SK-N-SH (cell line): ENCODE measurements at regions of chr4 and their contacts with region 1.

Region 1: GRCh38 chr4:3346146-3346545 is 53.3 kb downstream of the RGS12 start:
- DNase-seq: peak; percentile 81
- H3K4me3 ChIP-seq: no peak overlapping the region; a peak in 1 of 4 replicates
- H3K27ac ChIP-seq: no peak overlapping the region
- H3K4me1 ChIP-seq: peaks cover 0 to 4% of the 10 kb centered on the region in 2 experiments; a peak in 3 of 4 replicates
- H3K27me3 ChIP-seq: no peaks in the 10 kb centered on the region
- CTCF ChIP-seq: peak; percentile 93
- EP300 ChIP-seq: no peak
- RAD21 ChIP-seq: peak; percentile 87

Region 2: GRCh38 chr4:3324093-3324815 is 21.9 kb before region 1 on chr4:
- CTCF ChIA-PET with region 1: interaction called, 13 read pairs
- POLR2A ChIA-PET with region 1: no interaction called
- DNase-seq: no peak
- H3K4me3 ChIP-seq: no peak overlapping the region
- H3K27ac ChIP-seq: no peak overlapping the region
- H3K4me1 ChIP-seq: peaks cover 4 to 14% of the 10 kb centered on the region in 2 experiments; a peak in 2 of 4 replicates
- H3K27me3 ChIP-seq: no peaks in the 10 kb centered on the region
- CTCF ChIP-seq: no peak
- EP300 ChIP-seq: no peak
- RAD21 ChIP-seq: no peak

Region 3: DNA sequence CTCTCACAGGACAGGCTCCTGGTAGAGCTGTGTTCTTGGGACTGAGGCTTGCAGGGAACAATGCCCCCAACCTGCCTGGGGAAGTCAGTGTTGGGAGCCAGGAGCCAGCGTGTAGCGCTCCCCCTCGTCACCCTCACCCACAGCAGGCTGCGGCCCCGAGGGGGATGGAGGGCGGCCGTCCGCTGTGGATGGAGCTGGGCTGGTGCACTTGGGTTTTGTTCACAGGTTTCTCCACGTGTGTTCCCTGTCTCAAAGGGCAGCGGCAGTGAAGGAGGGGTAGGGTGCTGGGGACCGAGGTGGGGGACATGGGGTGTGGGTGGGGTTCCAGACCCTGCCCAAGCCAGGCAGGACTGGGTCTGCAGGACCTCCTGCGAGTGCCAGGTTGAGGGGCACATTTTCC is 15.8 kb after region 1 on chr4:
- CTCF ChIA-PET with region 1: interaction called, 31 read pairs
- POLR2A ChIA-PET with region 1: no interaction called
- DNase-seq: no peak
- H3K4me3 ChIP-seq: no peak overlapping the region
- H3K27ac ChIP-seq: no peak overlapping the region
- H3K4me1 ChIP-seq: no peaks in the 10 kb centered on the region; a peak in 1 of 4 replicates
- H3K27me3 ChIP-seq: no peaks in the 10 kb centered on the region
- CTCF ChIP-seq: no peak
- EP300 ChIP-seq: no peak
- RAD21 ChIP-seq: no peak

Region 4: DNA sequence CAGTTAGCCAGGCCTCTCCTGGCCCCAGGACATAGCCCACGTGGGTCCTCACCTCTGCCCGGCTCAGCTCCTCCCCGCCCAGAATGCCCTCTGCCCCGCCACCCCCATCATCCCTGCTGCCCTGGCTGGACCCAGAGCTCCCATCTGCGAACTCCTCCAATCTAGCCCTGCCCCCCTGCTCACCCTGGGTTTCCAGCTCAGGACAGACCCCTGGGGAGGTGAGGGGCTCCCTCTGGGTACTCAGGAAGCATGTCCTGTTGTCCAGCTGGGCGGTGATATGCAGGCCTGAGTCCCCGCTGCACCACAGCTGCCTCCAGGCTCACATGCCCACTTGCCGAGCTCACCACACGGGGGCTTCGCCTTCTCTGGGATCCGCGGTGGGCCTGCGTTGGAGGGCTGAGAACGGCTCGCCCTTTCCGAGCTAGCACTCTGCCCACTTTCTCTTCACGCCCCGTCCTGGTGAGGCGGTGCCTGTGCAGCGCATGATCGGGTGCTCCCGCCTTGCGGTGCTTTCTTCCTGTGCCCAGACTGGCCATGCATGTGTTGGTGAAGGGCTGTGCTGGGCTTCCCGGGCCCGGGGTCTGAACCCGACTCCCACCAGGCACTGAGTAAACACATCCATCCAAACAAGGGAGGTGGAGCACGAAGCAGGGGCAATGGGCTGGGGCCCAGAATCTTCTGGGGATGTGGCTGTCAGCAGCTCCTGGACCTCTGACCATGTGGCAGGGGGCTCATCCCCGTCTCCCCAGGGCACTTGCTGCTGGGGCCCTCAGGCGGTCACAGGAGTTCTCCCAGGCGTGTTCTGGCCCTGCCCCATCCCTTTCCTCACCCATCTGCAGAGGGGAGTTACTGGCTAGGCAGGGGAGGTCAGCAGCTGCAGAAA is 21.0 kb after region 1 on chr4:
- CTCF ChIA-PET with region 1: interaction called, 10 read pairs
- POLR2A ChIA-PET with region 1: no interaction called
- DNase-seq: peak; percentile 41
- H3K4me3 ChIP-seq: no peak overlapping the region
- H3K27ac ChIP-seq: no peak overlapping the region
- H3K4me1 ChIP-seq: peaks cover 19 to 28% of the 10 kb centered on the region in 2 experiments
- H3K27me3 ChIP-seq: no peaks in the 10 kb centered on the region
- CTCF ChIP-seq: no peak
- EP300 ChIP-seq: no peak
- RAD21 ChIP-seq: no peak

Region 5: GRCh38 chr4:3388471-3389232 is 42.5 kb after region 1 on chr4:
- CTCF ChIA-PET with region 1: interaction called, 10 read pairs
- POLR2A ChIA-PET with region 1: no interaction called
- DNase-seq: peak; percentile 39
- H3K4me3 ChIP-seq: no peak overlapping the region
- H3K27ac ChIP-seq: no peak overlapping the region
- H3K4me1 ChIP-seq: peaks cover 0 to 4% of the 10 kb centered on the region in 2 experiments; a peak in 1 of 4 replicates
- H3K27me3 ChIP-seq: no peaks in the 10 kb centered on the region
- CTCF ChIP-seq: no peak
- EP300 ChIP-seq: no peak
- RAD21 ChIP-seq: no peak

Region 6: DNA sequence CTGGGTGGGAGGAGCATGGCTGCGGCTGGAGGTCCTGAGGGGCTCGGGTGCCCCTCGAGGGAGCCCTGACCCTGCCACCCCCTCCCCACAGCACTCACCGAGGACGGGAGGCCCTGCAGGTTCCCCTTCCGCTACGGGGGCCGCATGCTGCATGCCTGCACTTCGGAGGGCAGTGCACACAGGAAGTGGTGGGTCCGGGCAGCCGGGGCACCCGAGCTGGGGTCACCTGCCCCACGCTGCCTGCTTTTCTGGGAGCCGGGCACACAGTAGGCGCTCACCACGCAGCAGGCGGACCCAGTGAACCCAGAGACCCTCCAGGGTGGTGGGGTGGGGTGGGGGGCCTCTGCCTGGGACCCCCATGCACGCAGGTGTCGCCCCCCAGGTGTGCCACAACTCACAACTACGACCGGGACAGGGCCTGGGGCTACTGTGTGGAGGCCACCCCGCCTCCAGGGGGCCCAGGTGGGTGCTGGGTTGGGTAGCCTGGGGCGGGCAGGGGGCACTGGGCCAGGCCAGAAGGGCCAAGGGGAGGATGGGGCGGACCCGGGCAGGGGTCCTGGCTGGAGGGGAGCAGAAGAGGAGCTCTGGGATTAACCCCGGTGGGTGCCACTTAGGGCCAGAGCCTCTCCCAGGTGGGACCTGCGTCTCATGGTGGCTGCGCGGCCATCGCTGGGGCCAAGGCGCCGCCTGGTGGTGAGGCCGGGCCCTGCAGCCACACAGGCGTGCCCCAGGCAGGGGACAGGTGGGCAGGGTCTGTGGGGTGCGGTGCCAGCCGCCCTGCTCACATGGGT is 97.0 kb after region 1 on chr4:
- CTCF ChIA-PET with region 1: interaction called, 142 read pairs
- POLR2A ChIA-PET with region 1: no interaction called
- DNase-seq: peak; percentile 94
- H3K4me3 ChIP-seq: no peak overlapping the region
- H3K27ac ChIP-seq: no peak overlapping the region
- H3K4me1 ChIP-seq: no peaks in the 10 kb centered on the region
- H3K27me3 ChIP-seq: no peaks in the 10 kb centered on the region
- CTCF ChIP-seq: peak; percentile 90
- EP300 ChIP-seq: no peak
- RAD21 ChIP-seq: peak; percentile 86